ENCODE measurements at regions of chr5 and their contacts with region 1.

Region 1: GRCh38 chr5:152097128-152097527 is 172.5 kb upstream of the GLRA1 start:
- DNase-seq: no peak
- H3K4me3 Mint-ChIP-seq: no peak overlapping the region
- H3K27ac Mint-ChIP-seq: no peak overlapping the region
- H3K4me1 Mint-ChIP-seq: peaks cover 8% of the 10 kb centered on the region
- H3K27me3 Mint-ChIP-seq: no peaks in the 10 kb centered on the region

Region 2: DNA sequence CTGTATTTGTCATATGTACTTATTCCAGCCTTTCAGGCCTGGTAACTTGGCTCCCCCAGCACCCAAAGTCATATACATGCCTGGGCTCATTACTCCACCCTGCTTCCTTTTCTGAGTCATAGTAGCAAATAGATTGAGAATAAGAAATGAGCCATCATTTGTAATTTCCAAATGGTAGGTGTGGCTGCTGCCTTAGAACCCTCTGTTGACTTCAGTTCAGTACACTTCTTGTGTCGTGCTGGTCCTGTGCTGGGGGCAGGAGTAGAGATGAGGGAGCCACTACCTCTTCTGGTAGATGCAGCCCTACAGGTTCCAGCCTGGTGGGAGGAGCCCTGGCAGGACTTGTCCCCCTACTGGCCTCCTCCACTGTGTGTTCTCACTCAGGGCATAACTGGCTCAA is 833.0 kb before region 1 on chr5:
- CTCF ChIA-PET with region 1: no interaction called
- intact Hi-C with region 1: no loop called
- DNase-seq: peak; percentile 65
- H3K4me3 Mint-ChIP-seq: no peak overlapping the region
- H3K27ac Mint-ChIP-seq: peak overlapping the region; percentile 84
- H3K4me1 Mint-ChIP-seq: peaks cover 13% of the 10 kb centered on the region
- H3K27me3 Mint-ChIP-seq: no peaks in the 10 kb centered on the region

Region 3: DNA sequence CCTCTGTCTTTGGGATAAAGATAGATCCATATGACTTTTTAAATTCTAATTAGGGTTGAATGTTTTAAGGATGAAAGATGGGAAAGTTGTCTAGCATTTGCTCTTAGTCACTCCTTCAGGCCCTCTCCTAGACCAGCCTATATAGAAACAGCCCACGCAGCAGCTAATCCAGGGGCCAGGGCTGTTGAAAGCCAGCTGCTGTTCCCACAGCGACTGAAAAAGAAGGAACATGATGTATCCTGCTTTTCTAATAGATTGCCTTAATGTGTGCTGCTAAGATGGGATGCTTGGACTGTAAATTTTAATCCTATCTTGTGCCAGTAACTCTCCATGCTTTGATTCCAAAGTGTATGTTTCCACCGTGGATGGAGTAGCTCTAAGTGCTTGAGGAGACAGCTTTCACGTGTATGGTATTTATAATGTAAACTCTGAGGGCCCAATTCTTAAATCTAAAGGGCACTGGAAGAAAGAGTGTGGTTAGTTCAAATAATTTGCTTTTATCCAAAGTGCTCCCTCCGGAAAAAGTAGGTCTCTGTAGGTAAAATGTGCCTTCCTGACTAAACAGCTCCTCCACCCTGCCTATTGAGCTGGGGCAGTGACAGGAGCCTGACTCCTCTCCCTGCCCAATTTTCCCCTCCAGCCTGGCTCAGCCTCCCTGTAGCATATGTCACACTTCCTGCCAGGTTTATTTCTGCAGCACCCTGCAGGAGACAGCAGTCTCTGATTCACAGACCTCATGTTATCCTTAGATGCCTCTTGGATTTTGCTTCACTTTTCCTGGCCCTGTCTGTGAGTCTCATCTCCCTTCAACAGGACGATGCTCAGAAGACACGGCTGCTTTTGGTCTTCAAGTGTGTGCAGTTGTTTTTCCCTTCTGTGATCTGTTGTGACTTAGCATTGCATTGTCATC is 616.5 kb before region 1 on chr5:
- CTCF ChIA-PET with region 1: no interaction called
- intact Hi-C with region 1: no loop called
- DNase-seq: no peak
- H3K4me3 Mint-ChIP-seq: no peak overlapping the region
- H3K27ac Mint-ChIP-seq: no peak overlapping the region
- H3K4me1 Mint-ChIP-seq: no peaks in the 10 kb centered on the region
- H3K27me3 Mint-ChIP-seq: no peaks in the 10 kb centered on the region

Region 4: DNA sequence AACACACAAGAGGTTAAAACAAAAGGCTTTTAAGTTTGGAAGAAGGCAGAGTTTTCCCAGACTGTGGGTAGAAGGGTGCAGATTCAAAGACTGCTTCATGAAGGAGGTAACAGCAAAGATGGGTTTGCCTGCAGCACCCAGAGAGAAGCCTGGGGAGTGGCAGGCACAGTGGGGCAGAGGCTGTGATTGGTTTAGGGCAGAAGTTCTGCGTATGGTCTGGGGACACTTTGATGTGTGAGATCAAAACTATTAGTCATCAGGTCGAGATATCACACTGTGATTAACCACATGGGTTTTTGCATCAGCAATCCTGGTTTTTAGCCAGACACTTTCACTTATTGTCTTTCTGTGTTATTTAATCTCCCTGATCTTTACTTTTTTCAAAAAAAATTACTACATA is 16.3 kb after region 1 on chr5:
- CTCF ChIA-PET with region 1: no interaction called
- intact Hi-C with region 1: loop called (anchors 1 kb)
- DNase-seq: peak; percentile 68
- H3K4me3 Mint-ChIP-seq: no peak overlapping the region
- H3K27ac Mint-ChIP-seq: no peak overlapping the region
- H3K4me1 Mint-ChIP-seq: peaks cover 4% of the 10 kb centered on the region
- H3K27me3 Mint-ChIP-seq: peaks cover 6% of the 10 kb centered on the region